B cell (primary cell): ENCODE measurements at regions of chr17 and their contacts with region 1.

Region 1: DNA sequence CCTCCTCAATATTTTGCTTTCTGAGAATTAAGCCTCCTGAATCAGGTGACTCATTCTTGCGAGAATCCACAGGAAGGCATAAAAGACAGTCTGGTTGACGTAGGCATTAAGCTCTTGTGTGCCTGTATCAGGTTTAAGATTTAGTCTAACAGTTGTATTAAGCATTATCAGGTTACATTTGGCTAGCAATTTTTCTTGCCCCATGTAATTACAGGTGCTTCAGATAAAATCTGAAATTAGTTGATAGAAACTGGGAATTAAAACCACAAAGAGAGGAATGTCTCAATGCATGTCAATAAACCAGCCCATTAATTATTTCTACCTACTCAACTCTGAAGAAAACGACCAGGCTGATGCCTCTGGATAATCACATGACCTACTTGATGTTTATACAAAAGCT is 217.3 kb downstream of the CA10 start:
- DNase-seq: no peak
- ATAC-seq: no peak
- H3K4me3 ChIP-seq: no peak overlapping the region
- H3K4me3 Mint-ChIP-seq: no peak overlapping the region
- H3K27ac ChIP-seq: no peak overlapping the region
- H3K27ac Mint-ChIP-seq: no peak overlapping the region
- H3K4me1 ChIP-seq: no peaks in the 10 kb centered on the region
- H3K4me1 Mint-ChIP-seq: no peaks in the 10 kb centered on the region
- H3K27me3 ChIP-seq: no peaks in the 10 kb centered on the region
- H3K27me3 Mint-ChIP-seq: no peaks in the 10 kb centered on the region
- CTCF ChIP-seq: no peak

Region 2: DNA sequence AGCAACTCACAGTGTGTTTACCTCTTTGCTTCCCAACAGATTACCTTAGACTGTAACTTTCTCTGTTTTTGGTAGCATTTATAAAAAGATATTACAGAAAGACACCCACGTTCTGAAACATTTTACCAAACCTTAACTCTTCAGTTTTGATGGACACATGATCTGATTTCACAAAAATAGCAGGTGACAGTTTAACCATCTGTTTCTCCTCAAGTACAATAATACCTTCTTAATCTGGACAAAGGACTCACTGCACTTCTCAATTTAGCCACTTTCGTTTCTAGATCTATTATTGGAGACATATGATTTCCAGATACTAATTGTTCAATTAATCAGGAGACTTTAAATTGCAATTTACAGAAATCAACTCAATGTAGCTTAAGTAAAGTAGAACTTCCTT is 1177.7 kb after region 1 on chr17:
- CTCF ChIA-PET with region 1: no interaction called
- POLR2A ChIA-PET with region 1: interaction called, 13 read pairs
- intact Hi-C with region 1: no loop called
- DNase-seq: no peak
- ATAC-seq: no peak
- H3K4me3 ChIP-seq: no peak overlapping the region
- H3K4me3 Mint-ChIP-seq: no peak overlapping the region
- H3K27ac ChIP-seq: no peak overlapping the region
- H3K27ac Mint-ChIP-seq: no peak overlapping the region
- H3K4me1 ChIP-seq: no peaks in the 10 kb centered on the region
- H3K4me1 Mint-ChIP-seq: no peaks in the 10 kb centered on the region
- H3K27me3 ChIP-seq: no peaks in the 10 kb centered on the region
- H3K27me3 Mint-ChIP-seq: no peaks in the 10 kb centered on the region
- CTCF ChIP-seq: no peak